Heart left ventricle (tissue), 16 donors: ENCODE measurements at regions of chr15 and their contacts with region 1.

Region 1: DNA sequence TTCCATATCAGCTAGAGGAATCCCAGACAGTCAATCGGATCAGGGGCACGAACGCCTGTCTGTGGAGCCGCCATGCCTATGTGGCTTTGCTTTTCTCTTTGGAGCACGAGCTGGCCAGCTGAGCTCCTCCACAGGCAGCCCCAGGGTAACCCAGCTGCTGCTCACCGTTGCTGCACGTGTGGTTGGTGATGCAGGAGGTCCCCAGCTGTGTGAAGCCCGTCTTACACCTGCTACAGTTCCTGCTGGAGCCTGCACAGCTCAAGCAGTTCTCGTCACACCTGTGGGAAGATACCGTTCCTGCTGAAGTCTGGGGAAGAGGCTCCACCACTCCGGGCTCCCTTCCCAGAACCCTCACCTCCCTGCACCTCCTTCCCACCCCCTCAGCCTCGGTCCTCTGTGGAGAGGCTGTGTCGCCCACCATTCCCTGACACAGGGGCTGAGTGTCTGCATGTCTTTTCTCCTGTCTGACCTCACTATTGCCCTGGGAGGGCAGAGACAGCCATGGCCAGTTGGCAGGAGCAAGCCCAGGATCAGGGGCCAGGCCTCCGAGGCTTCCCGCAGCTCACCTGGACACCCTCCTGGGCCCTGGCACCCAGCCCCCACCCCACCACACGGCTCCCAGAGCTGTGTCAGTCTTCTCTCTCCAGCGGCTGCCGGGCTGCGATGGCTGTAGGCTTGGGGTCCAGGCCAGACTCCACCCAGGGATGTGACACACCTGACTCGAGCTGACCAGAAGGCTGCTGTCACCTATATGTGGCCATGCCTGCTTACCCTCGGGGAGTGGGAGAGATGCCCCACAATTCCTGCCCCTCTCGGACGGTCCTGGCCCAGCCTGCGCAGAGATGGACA is 12.2 kb upstream of the SNRPA1 start:
- DNase-seq: peak in 1 of 5 donors; percentile 4
- ATAC-seq: peak in 1 of 4 donors; percentile 17
- H3K4me3 ChIP-seq: no peak overlapping the region
- H3K27ac ChIP-seq: no peak overlapping the region
- H3K4me1 ChIP-seq: no peaks in the 10 kb centered on the region
- H3K27me3 ChIP-seq: peaks cover 0 to 7% (median 0%) of the 10 kb centered on the region in 9 donors
- CTCF ChIP-seq: no peak
- POLR2A ChIP-seq: no peak

Region 2: GRCh38 chr15:101358895-101359294 is 51.6 kb after region 1 on chr15:
- intact Hi-C with region 1: no loop called
- DNase-seq: peak in 3 of 5 donors; percentile 58 to 77 (median 71)
- ATAC-seq: peak; percentile 79 to 86 (median 82)
- H3K4me3 ChIP-seq: no peak overlapping the region
- H3K27ac ChIP-seq: peak overlapping the region in 7 of 12 donors; percentile 16 to 76 (median 60)
- H3K4me1 ChIP-seq: peaks cover 0 to 27% (median 7%) of the 10 kb centered on the region in 12 donors
- H3K27me3 ChIP-seq: no peaks in the 10 kb centered on the region
- CTCF ChIP-seq: no peak
- POLR2A ChIP-seq: no peak

Region 3: DNA sequence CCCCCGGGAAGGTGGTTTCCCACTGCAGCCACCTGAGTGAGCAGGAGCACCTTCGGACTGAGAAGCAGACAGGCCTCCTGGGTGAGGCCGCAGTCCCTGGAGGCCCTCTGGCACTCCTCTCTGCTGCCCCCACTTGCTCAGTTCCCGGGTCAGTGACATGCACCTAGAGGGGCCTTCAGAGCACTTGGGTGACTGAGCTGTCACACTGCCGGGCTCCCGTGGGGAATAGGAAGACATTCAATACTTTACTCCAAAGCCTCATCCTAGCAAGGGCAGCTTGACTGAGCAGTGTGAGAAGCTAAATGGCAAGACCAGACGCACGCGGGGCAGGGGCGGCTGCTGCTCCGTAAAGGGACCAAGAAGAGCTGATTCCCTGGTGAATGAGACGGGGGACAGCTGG is 119.6 kb after region 1 on chr15:
- intact Hi-C with region 1: loop called in 1 of 10 experiments (anchors 10 kb)
- DNase-seq: no peak
- ATAC-seq: no peak
- H3K4me3 ChIP-seq: no peak overlapping the region
- H3K27ac ChIP-seq: no peak overlapping the region
- H3K4me1 ChIP-seq: no peaks in the 10 kb centered on the region
- H3K27me3 ChIP-seq: no peaks in the 10 kb centered on the region
- CTCF ChIP-seq: no peak
- POLR2A ChIP-seq: no peak

Region 4: GRCh38 chr15:101578437-101578894 is 271.2 kb after region 1 on chr15:
- intact Hi-C with region 1: loop called in 1 of 10 experiments (anchors 5 kb)
- DNase-seq: peak in 4 of 5 donors; percentile 41 to 70 (median 54)
- ATAC-seq: peak; percentile 35 to 56 (median 52)
- H3K4me3 ChIP-seq: no peak overlapping the region
- H3K27ac ChIP-seq: no peak overlapping the region
- H3K4me1 ChIP-seq: peaks cover 0 to 7% (median 0%) of the 10 kb centered on the region in 12 donors
- H3K27me3 ChIP-seq: peaks cover 0 to 4% (median 0%) of the 10 kb centered on the region in 9 donors
- CTCF ChIP-seq: peak; percentile 18 to 56 (median 50)
- POLR2A ChIP-seq: no peak